Panc1 (cell line): ENCODE measurements at regions of chr5 and their contacts with region 1.

Region 1: DNA sequence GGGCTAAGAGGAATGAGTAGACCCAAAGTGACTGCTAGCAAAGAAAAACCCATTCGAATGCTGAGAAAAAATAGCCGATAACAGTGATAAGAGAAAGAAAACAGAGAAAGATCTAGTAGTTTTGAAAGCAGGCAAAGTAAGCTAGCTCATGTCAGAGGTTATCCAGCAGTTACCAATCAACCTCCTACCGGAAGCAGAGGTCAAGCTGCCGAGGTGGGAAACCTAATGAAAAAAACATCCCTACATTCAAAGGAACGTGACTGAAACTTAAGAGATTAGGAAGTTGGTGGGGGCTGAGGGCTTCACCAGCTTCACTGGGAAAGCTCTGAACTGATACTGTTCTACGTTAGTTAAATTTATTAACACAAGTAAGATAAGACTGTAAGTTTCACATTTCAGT is 32.6 kb downstream of the SSBP2 start:
- DNase-seq: no peak
- ATAC-seq: no peak
- H3K4me3 ChIP-seq: no peak overlapping the region
- H3K27ac ChIP-seq: no peak overlapping the region
- H3K4me1 ChIP-seq: peaks cover 3% of the 10 kb centered on the region; the same call in 1 of the 2 replicates
- H3K27me3 ChIP-seq: no peaks in the 10 kb centered on the region
- CTCF ChIP-seq: no peak

Region 2: GRCh38 chr5:81247441-81247972 is 470.8 kb before region 1 on chr5:
- CTCF ChIA-PET with region 1: no interaction called
- POLR2A ChIA-PET with region 1: no interaction called
- in situ Hi-C with region 1: no loop called
- intact Hi-C with region 1: no loop called
- DNase-seq: no peak
- ATAC-seq: no peak
- H3K4me3 ChIP-seq: no peak overlapping the region
- H3K27ac ChIP-seq: no peak overlapping the region
- H3K4me1 ChIP-seq: no peaks in the 10 kb centered on the region
- H3K27me3 ChIP-seq: no peaks in the 10 kb centered on the region
- CTCF ChIP-seq: no peak

Region 3: GRCh38 chr5:81838307-81838906 is 120.1 kb after region 1 on chr5:
- CTCF ChIA-PET with region 1: no interaction called
- POLR2A ChIA-PET with region 1: no interaction called
- in situ Hi-C with region 1: no loop called
- intact Hi-C with region 1: no loop called
- DNase-seq: no peak
- ATAC-seq: peak; percentile 88; the same call in 1 of the 2 replicates
- H3K4me3 ChIP-seq: no peak overlapping the region
- H3K27ac ChIP-seq: no peak overlapping the region
- H3K4me1 ChIP-seq: no peaks in the 10 kb centered on the region
- H3K27me3 ChIP-seq: no peaks in the 10 kb centered on the region
- CTCF ChIP-seq: peak; percentile 76

Region 4: GRCh38 chr5:82165740-82166530 is 447.6 kb after region 1 on chr5:
- CTCF ChIA-PET with region 1: no interaction called
- POLR2A ChIA-PET with region 1: interaction called, 15 read pairs
- in situ Hi-C with region 1: no loop called
- intact Hi-C with region 1: no loop called
- DNase-seq: no peak
- ATAC-seq: peak; percentile 95
- H3K4me3 ChIP-seq: no peak overlapping the region
- H3K27ac ChIP-seq: no peak overlapping the region
- H3K4me1 ChIP-seq: peaks cover 4% of the 10 kb centered on the region; the same call in 1 of the 2 replicates
- H3K27me3 ChIP-seq: no peaks in the 10 kb centered on the region
- CTCF ChIP-seq: peak; percentile 79